ENCODE measurements at regions of chr15 and their contacts with region 1.

Region 1: GRCh38 chr15:76190834-76191538 is 120.3 kb downstream of the ETFA start:
- DNase-seq: peak; percentile 87
- H3K4me3 ChIP-seq: no peak overlapping the region
- H3K27ac ChIP-seq: no peak overlapping the region
- H3K4me1 ChIP-seq: peaks cover 8% of the 10 kb centered on the region
- H3K27me3 ChIP-seq: no peaks in the 10 kb centered on the region
- CTCF ChIP-seq: peak; percentile 69

Region 2: GRCh38 chr15:75723847-75724660 is 466.9 kb before region 1 on chr15:
- intact Hi-C with region 1: no loop called
- DNase-seq: peak; percentile 88
- H3K4me3 ChIP-seq: no peak overlapping the region
- H3K27ac ChIP-seq: peak overlapping the region; percentile 38
- H3K4me1 ChIP-seq: peaks cover 6% of the 10 kb centered on the region
- H3K27me3 ChIP-seq: no peaks in the 10 kb centered on the region
- CTCF ChIP-seq: no peak

Region 3: GRCh38 chr15:76115888-76116885 is 74.8 kb before region 1 on chr15:
- intact Hi-C with region 1: no loop called
- DNase-seq: no peak
- H3K4me3 ChIP-seq: no peak overlapping the region
- H3K27ac ChIP-seq: no peak overlapping the region
- H3K4me1 ChIP-seq: no peaks in the 10 kb centered on the region
- H3K27me3 ChIP-seq: no peaks in the 10 kb centered on the region
- CTCF ChIP-seq: no peak

Region 4: DNA sequence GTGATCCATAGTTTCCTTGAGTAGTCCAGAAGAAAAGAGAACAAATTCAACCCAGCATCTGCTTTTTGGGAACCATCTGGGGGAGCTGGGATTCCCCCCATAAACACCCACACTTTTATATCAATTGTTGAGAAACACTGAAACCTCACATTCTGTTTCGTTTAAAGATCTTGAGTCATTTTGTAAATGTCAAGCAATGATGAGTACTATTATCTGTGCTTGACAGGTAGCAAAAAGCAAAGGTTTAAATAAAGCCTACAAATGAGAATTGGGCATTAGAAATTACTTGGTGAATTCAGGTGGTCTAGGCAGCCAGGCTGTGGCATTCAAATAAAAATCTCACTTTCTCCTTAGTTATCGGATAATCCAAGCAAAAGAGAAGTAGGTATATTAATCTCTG is 55.5 kb before region 1 on chr15:
- intact Hi-C with region 1: no loop called
- DNase-seq: no peak
- H3K4me3 ChIP-seq: no peak overlapping the region
- H3K27ac ChIP-seq: no peak overlapping the region
- H3K4me1 ChIP-seq: peaks cover 3% of the 10 kb centered on the region
- H3K27me3 ChIP-seq: no peaks in the 10 kb centered on the region
- CTCF ChIP-seq: no peak

Region 5: GRCh38 chr15:76333720-76334437 is 142.9 kb after region 1 on chr15:
- intact Hi-C with region 1: loop called (anchors 2 kb)
- DNase-seq: no peak
- H3K4me3 ChIP-seq: no peak overlapping the region
- H3K27ac ChIP-seq: no peak overlapping the region
- H3K4me1 ChIP-seq: peaks cover 11% of the 10 kb centered on the region
- H3K27me3 ChIP-seq: peaks cover 51% of the 10 kb centered on the region
- CTCF ChIP-seq: no peak